CD8-positive, alpha-beta T cell (primary cell): ENCODE measurements at regions of chr4 and their contacts with region 1.

Region 1: DNA sequence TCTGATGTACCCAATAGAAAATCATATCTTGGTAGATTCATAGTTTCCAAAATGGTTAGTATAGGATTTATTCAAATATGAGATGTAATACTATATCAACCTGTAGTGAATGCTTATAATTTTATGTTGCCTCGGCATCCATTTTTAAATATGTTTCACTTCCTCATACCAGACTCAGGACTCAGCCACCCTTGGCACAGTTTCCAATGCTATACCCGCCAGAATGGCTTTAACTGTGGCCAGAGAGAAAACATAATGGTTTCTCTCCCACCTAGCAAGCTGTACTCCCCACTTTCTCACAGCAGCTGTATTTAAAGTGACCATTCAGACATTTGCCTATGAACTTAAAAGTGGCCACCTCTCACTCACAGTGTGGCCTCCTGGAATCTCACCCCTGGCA is 466.6 kb upstream of the PABPC4L start:
- DNase-seq: no peak
- ATAC-seq: no peak
- H3K4me3 ChIP-seq: no peak overlapping the region
- H3K4me3 Mint-ChIP-seq: no peak overlapping the region
- H3K27ac ChIP-seq: no peak overlapping the region
- H3K27ac Mint-ChIP-seq: no peak overlapping the region
- H3K4me1 ChIP-seq: no peaks in the 10 kb centered on the region
- H3K4me1 Mint-ChIP-seq: no peaks in the 10 kb centered on the region
- H3K27me3 ChIP-seq: no peaks in the 10 kb centered on the region
- H3K27me3 Mint-ChIP-seq: no peaks in the 10 kb centered on the region
- CTCF ChIP-seq: no peak

Region 2: GRCh38 chr4:134708026-134708425 is 39.8 kb after region 1 on chr4:
- CTCF ChIA-PET with region 1: no interaction called
- POLR2A ChIA-PET with region 1: no interaction called
- intact Hi-C with region 1: loop called in 1 of 2 experiments (anchors 1 kb)
- DNase-seq: no peak
- ATAC-seq: no peak
- H3K4me3 ChIP-seq: no peak overlapping the region
- H3K4me3 Mint-ChIP-seq: no peak overlapping the region
- H3K27ac ChIP-seq: no peak overlapping the region
- H3K27ac Mint-ChIP-seq: no peak overlapping the region
- H3K4me1 ChIP-seq: no peaks in the 10 kb centered on the region
- H3K4me1 Mint-ChIP-seq: no peaks in the 10 kb centered on the region
- H3K27me3 ChIP-seq: no peaks in the 10 kb centered on the region
- H3K27me3 Mint-ChIP-seq: no peaks in the 10 kb centered on the region
- CTCF ChIP-seq: no peak